ENCODE measurements at regions of chr6 and their contacts with region 1.

Region 1: DNA sequence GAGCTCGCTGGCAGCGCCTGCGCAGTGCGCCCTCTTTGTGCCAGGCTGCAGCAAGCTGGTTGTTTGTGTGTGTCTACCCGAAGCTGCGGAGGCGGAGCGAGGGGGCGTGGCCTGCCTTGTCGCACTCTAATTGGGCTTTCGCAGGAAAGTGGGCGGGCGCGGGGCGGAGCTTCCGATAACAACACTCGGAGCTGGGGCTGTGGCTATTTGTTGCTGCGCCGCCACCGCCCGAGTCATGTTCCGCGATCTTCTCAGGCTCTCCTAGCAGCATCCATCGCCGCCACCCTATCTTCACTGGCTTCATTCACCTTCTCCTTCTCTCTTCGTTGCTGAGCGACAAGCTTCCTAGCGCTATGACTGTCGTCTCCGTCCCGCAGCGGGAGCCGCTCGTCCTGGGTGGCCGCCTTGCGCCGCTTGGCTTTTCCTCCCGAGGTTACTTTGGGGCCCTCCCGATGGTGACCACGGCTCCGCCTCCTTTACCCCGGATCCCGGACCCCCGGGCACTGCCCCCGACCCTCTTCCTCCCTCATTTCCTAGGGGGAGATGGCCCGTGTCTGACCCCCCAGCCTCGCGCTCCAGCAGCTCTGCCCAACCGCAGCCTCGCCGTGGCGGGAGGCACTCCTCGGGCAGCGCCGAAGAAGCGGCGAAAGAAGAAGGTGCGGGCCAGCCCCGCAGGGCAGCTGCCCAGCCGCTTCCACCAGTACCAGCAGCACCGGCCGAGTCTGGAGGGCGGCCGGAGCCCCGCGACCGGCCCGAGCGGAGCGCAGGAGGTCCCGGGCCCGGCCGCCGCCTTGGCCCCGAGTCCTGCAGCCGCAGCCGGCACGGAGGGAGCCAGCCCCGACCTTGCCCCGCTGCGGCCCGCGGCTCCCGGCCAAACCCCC is at the start of gene PNRC1:
- DNase-seq: peak; percentile 95
- ATAC-seq: peak; percentile 80
- H3K4me3 ChIP-seq: peak within 1 kb of the TSS; percentile 89 to 100 (median 95)
- H3K27ac ChIP-seq: peak within 1 kb of the TSS; percentile 96
- H3K4me1 ChIP-seq: peaks cover 31% of the 10 kb centered on the region
- H3K27me3 ChIP-seq: no peaks in the 10 kb centered on the region; a peak in 1 of 5 replicates
- CTCF ChIP-seq: peak; percentile 40; the same call in 1 of the 2 replicates
- EP300 ChIP-seq: 0 out of 4 replicates have a peak, but pooled peaks of 1 of the 2 experiments have one; percentile 6
- POLR2A ChIP-seq: peak; percentile 99 to 100
- RAD21 ChIP-seq: peak; percentile 13; the same call in 1 of the 2 replicates
- total RNA-seq, gene PNRC1: 31.0 and 36.0 TPM in 2 replicates

Region 2: DNA sequence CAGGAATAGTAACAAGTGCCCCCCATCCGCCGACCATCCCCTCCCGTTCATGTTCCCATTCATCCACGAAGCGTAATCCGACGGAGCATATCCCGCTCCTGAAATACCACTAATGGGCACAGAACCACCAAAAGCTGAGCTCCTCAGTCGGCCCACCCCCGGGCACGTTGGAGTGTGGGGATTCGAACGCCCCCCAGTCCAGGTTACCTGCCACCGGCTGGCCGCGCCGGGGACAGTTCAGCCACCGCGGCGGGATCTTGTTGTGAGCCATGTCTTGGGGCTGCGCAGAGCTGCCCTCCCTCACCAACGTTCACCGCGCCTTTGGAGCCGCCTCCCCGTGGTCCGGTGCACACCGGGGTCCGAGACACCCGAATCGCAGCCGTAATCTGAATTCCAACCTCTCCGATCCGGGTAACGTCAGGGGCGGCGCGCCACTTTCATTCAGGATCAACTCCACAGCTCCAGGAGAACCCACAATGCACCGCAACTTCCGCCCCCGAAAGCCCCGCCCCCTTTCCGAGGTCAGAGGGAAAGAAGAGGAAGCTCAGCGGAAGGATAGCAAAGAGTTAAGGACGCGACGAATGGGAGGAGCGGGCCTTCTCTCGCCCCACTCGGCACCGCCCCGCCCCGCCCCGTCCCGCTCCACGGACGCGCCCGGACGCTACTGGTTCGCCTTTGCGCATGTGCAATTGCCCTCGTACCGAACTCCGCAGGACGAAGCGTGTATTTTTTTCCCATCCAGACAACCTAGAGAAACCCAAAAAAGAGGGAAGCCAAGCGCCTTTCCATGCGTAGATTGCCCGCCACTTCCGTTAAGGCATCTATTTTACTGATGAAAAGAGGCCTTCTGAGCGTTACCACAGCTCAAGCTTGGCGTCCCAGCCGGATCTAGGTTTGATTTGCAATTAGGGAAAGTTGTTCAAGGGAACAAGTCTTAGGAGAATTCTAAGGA is 117.4 kb before region 1 on chr6 and contains the start of gene RNGTT:
- CTCF ChIA-PET with region 1: no interaction called
- POLR2A ChIA-PET with region 1: interaction called, 16 read pairs
- in situ Hi-C with region 1: no loop called
- intact Hi-C with region 1: no loop called
- DNase-seq: peak; percentile 97
- ATAC-seq: peak; percentile 96
- H3K4me3 ChIP-seq: peak within 1 kb of the TSS; percentile 86 to 93 (median 90)
- H3K27ac ChIP-seq: peak within 1 kb of the TSS; percentile 84
- H3K4me1 ChIP-seq: peaks cover 72% of the 10 kb centered on the region
- H3K27me3 ChIP-seq: no peaks in the 10 kb centered on the region; a peak in 1 of 5 replicates
- CTCF ChIP-seq: 0 out of 2 replicates have a peak, but pooled peaks have one; percentile 15
- EP300 ChIP-seq: no peak; a peak in 1 of 4 replicates
- POLR2A ChIP-seq: peak; percentile 63 to 69
- RAD21 ChIP-seq: no peak
- total RNA-seq, gene RNGTT: 22.6 and 27.8 TPM in 2 replicates

Region 3: GRCh38 chr6:88982720-88983119 is 98.1 kb before region 1 on chr6:
- CTCF ChIA-PET with region 1: no interaction called
- POLR2A ChIA-PET with region 1: interaction called, 15 read pairs
- in situ Hi-C with region 1: loop called (anchors 10 kb)
- intact Hi-C with region 1: loop called (anchors 1 kb)
- DNase-seq: peak; percentile 55
- ATAC-seq: peak; percentile 65
- H3K4me3 ChIP-seq: no peak overlapping the region
- H3K27ac ChIP-seq: no peak overlapping the region
- H3K4me1 ChIP-seq: peaks cover 25% of the 10 kb centered on the region
- H3K27me3 ChIP-seq: no peaks in the 10 kb centered on the region; a peak in 1 of 5 replicates
- CTCF ChIP-seq: peak; percentile 79
- EP300 ChIP-seq: no peak
- POLR2A ChIP-seq: no peak
- RAD21 ChIP-seq: peak; percentile 74; the same call in 1 of the 2 replicates

Region 4: GRCh38 chr6:89050155-89050554 is 30.6 kb before region 1 on chr6:
- CTCF ChIA-PET with region 1: no interaction called
- POLR2A ChIA-PET with region 1: interaction called, 15 read pairs
- in situ Hi-C with region 1: no loop called
- intact Hi-C with region 1: no loop called
- DNase-seq: peak; percentile 23
- ATAC-seq: peak; percentile 71
- H3K4me3 ChIP-seq: no peak overlapping the region
- H3K27ac ChIP-seq: no peak overlapping the region
- H3K4me1 ChIP-seq: peaks cover 26% of the 10 kb centered on the region
- H3K27me3 ChIP-seq: 0 out of 5 replicates have a peak, but pooled peaks cover 0 to 3% of the 10 kb centered on the region in 2 experiments
- CTCF ChIP-seq: no peak
- EP300 ChIP-seq: no peak
- POLR2A ChIP-seq: no peak
- RAD21 ChIP-seq: no peak

Region 5: DNA sequence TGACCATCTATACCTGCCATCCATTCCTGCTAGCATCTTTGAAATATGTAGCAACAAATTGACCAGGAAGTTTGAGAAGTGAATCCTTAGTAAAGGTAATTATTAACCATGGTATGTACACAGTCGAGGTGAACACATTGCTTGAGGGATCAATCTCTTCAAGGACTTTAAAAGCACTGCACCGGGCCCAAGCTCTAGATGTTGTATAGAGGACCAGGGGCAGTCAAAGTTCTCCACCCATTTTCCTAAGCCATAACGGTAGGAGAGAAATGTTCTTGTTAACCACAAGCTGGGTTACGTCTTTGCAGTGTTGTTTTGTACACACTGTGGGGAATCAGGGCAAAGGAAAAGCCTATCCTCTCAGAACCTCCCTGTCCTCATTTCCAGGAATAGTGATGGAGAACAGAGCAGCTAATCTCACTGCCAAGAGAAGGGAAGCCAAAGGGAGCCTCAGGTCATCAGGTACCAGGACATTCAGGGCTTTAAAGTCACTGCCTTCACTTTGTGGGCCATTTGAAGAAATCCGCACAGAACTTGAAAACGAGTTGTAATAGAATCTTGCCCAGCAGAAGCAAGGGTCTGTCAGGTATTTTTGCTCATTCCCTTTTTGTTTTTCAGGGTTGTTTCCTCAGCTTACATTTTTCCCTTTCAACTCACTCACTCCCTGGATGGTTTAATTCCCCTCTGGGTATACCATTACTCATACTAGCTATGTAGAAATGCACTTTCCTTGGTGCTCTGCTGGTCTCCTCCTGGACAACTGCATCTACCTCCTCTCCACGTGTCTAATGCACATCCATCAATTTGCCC is 59.8 kb after region 1 on chr6:
- CTCF ChIA-PET with region 1: no interaction called
- POLR2A ChIA-PET with region 1: interaction called, 20 read pairs
- in situ Hi-C with region 1: no loop called
- intact Hi-C with region 1: loop called (anchors 5 kb)
- DNase-seq: peak; percentile 82
- ATAC-seq: peak; percentile 99
- H3K4me3 ChIP-seq: no peak overlapping the region; a peak in 1 of 6 replicates
- H3K27ac ChIP-seq: peak overlapping the region; percentile 37
- H3K4me1 ChIP-seq: peaks cover 35% of the 10 kb centered on the region
- H3K27me3 ChIP-seq: no peaks in the 10 kb centered on the region; a peak in 1 of 5 replicates
- CTCF ChIP-seq: no peak
- EP300 ChIP-seq: peak in 1 of 2 experiments; percentile 63; a peak in 1 of 4 replicates
- POLR2A ChIP-seq: no peak
- RAD21 ChIP-seq: no peak

Region 6: GRCh38 chr6:89454301-89454700 is 373.5 kb after region 1 on chr6:
- CTCF ChIA-PET with region 1: no interaction called
- POLR2A ChIA-PET with region 1: no interaction called
- in situ Hi-C with region 1: no loop called
- intact Hi-C with region 1: no loop called
- DNase-seq: no peak
- ATAC-seq: no peak
- H3K4me3 ChIP-seq: no peak overlapping the region
- H3K27ac ChIP-seq: no peak overlapping the region
- H3K4me1 ChIP-seq: no peaks in the 10 kb centered on the region
- H3K27me3 ChIP-seq: no peaks in the 10 kb centered on the region
- CTCF ChIP-seq: no peak
- EP300 ChIP-seq: no peak
- POLR2A ChIP-seq: no peak
- RAD21 ChIP-seq: no peak

Region 7: GRCh38 chr6:90650041-90650940 is 1569.5 kb after region 1 on chr6:
- CTCF ChIA-PET with region 1: no interaction called
- POLR2A ChIA-PET with region 1: no interaction called
- in situ Hi-C with region 1: no loop called
- intact Hi-C with region 1: no loop called
- DNase-seq: no peak
- ATAC-seq: no peak
- H3K4me3 ChIP-seq: no peak overlapping the region
- H3K27ac ChIP-seq: no peak overlapping the region
- H3K4me1 ChIP-seq: no peaks in the 10 kb centered on the region
- H3K27me3 ChIP-seq: peaks cover 0 to 15% of the 10 kb centered on the region in 2 experiments; a peak in 2 of 5 replicates
- CTCF ChIP-seq: no peak
- EP300 ChIP-seq: no peak
- POLR2A ChIP-seq: no peak
- RAD21 ChIP-seq: no peak